A673 (cell line): ENCODE measurements at regions of chr2 and their contacts with region 1.

Region 1: DNA sequence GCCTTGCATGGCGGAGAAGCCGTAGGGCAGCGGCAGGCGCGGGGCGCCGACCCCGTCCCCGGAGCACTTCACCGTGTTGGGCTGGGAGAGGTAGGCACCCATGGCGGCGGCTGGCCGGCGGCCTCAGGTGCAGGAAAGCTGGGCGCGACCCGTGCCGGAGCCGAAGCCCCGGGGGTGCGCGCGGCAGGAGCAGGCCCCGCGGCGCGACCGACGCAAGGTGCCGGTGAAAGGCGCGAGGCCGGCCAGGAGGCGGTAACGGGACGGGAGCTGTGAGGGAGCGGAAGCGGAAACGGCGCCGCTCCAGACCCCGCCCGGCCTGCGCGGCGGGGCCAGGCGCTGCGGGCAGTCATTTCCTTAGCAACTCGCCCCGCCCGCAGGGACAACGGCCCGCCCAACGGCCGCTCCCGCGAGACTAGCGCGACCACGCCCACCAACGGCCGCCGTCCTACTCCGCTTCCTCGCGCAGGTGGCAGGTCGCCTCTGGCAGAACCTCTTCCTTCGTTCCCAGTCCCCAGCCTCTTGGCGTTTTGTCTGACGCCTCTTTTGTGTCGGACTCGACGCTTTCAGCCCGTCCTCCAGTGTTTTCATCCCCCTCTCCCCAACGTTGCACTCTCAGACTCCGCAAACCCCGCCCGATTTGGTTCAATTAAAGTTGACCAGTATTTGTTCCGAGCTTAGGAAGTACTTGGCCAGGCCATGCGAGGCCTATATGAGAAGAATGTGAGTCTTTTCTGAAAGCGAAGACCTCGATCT is at the start of gene PPM1G:
- DNase-seq: peak; percentile 96
- H3K4me3 ChIP-seq: peak within 1 kb of the TSS; percentile 100
- H3K27ac ChIP-seq: peak within 1 kb of the TSS; percentile 92
- H3K4me1 ChIP-seq: peaks cover 11% of the 10 kb centered on the region
- H3K27me3 ChIP-seq: no peaks in the 10 kb centered on the region
- CTCF ChIP-seq: no peak
- total RNA-seq, gene PPM1G: 147 and 155 TPM in 2 replicates

Region 2: GRCh38 chr2:27428213-27428977 is 18.9 kb after region 1 on chr2 and contains the start of gene NRBP1:
- CTCF ChIA-PET with region 1: interaction called, 5 read pairs
- POLR2A ChIA-PET with region 1: interaction called, 11 read pairs
- intact Hi-C with region 1: no loop called
- DNase-seq: peak; percentile 94
- H3K4me3 ChIP-seq: peak within 1 kb of the TSS; percentile 64
- H3K27ac ChIP-seq: peak within 1 kb of the TSS; percentile 85
- H3K4me1 ChIP-seq: peaks cover 8% of the 10 kb centered on the region
- H3K27me3 ChIP-seq: no peaks in the 10 kb centered on the region
- CTCF ChIP-seq: no peak; the same call in 1 of the 2 replicates
- total RNA-seq, gene NRBP1: 86.3 and 93.0 TPM in 2 replicates

Region 3: DNA sequence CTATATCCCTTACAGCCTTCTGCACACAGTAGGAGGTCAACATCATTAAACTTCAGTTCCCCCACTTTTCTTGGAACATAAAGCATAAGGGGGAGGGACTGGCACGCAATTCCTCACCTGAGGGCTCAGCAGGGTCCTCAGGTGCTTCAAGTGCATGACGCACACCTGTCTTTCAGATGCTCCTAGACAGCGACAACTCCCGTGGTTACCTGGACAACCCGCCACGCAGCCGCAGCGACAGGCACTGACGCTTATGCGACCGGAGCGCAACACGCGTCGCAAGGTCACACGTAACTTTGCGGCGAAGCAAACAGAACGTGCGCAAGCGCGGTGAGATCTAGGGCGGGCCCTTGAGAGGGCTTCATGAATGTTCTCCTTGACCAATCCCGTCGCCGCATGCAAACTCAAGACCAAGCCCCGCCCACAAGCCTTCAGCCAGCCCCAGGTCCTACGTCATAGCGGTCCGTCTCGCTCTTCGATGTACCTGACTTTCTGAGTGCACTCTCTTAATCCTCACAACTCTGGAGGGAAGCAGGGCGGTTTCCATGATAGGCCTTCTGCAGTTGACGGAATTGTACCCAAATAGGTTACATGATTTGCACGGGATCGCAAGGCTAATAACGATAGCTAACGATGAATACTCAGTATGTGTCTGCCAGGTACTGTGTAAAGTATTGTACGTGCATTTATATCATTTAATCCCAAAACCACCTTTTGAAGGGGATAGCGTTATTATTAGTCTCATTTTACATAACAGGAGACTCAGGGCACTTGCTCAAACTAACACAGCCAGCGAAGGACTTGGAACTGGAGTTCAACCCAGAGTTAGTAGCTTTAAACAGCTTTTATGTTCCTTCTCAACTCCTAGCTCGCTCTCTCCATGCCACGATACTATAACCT is 80.3 kb after region 1 on chr2 and contains the start of gene IFT172:
- CTCF ChIA-PET with region 1: no interaction called
- POLR2A ChIA-PET with region 1: no interaction called
- intact Hi-C with region 1: loop called (anchors 2 kb)
- DNase-seq: peak; percentile 100
- H3K4me3 ChIP-seq: peak within 1 kb of the TSS; percentile 75
- H3K27ac ChIP-seq: peak within 1 kb of the TSS; percentile 60
- H3K4me1 ChIP-seq: no peaks in the 10 kb centered on the region
- H3K27me3 ChIP-seq: no peaks in the 10 kb centered on the region
- CTCF ChIP-seq: no peak
- total RNA-seq, gene IFT172: 42.2 and 50.4 TPM in 2 replicates

Region 4: DNA sequence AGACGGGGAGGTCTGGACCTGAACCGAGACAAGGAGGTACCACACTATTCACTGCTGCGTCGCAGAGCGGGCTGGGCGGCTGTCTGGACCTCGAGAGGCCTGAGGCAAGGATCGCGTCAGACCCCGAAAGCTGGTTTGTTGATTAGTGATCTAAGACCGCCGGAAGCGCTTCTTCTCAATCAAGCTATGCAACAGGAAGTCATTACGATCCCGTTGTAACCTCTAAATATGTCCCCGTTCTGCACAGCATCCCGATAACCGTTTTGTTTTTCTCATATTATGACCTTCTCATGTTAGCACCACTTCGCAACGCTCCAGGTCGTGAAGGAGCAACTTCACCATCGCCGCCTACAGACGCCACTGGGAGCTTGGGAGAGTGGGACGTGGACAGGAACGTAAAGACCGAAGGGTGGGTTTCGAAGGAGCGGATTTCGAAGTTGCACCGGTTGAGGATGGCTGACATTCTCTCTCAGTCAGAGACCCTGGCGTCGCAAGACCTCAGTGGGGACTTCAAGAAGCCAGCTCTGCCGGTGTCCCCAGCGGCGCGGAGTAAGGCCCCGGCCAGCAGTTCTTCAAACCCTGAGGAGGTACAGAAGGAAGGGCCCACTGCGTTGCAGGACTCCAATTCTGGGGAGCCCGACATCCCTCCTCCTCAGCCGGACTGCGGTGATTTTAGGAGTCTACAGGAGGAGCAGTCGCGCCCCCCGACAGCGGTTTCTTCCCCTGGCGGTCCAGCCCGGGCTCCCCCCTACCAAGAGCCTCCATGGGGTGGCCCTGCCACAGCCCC is 254.2 kb after region 1 on chr2 and contains the starts of genes SLC4A1AP and SUPT7L:
- CTCF ChIA-PET with region 1: no interaction called
- POLR2A ChIA-PET with region 1: no interaction called
- intact Hi-C with region 1: loop called (anchors 10 kb)
- DNase-seq: peak; percentile 88
- H3K4me3 ChIP-seq: peak within 1 kb of the TSS; percentile 82
- H3K27ac ChIP-seq: peak within 1 kb of the TSS; percentile 93
- H3K4me1 ChIP-seq: peaks cover 20% of the 10 kb centered on the region
- H3K27me3 ChIP-seq: no peaks in the 10 kb centered on the region
- CTCF ChIP-seq: no peak; the same call in 1 of the 2 replicates
- total RNA-seq, gene SLC4A1AP: 29.7 and 30.4 TPM in 2 replicates
- total RNA-seq, gene SUPT7L: 33.1 and 34.0 TPM in 2 replicates